ENCODE measurements at regions of chr2 and their contacts with region 1.

Region 1: GRCh38 chr2:236512902-236513435 is 56.7 kb upstream of the ACKR3 start:
- DNase-seq: peak; percentile 57
- H3K4me3 Mint-ChIP-seq: no peak overlapping the region
- H3K27ac Mint-ChIP-seq: no peak overlapping the region
- H3K4me1 Mint-ChIP-seq: no peaks in the 10 kb centered on the region
- H3K27me3 Mint-ChIP-seq: peaks cover 23% of the 10 kb centered on the region

Region 2: GRCh38 chr2:236536727-236537398 is 23.9 kb after region 1 on chr2:
- intact Hi-C with region 1: loop called (anchors 1 kb)
- DNase-seq: peak; percentile 41
- H3K4me3 Mint-ChIP-seq: peak overlapping the region; percentile 88
- H3K27ac Mint-ChIP-seq: peak overlapping the region; percentile 80
- H3K4me1 Mint-ChIP-seq: peaks cover 55% of the 10 kb centered on the region
- H3K27me3 Mint-ChIP-seq: peaks cover 2% of the 10 kb centered on the region

Region 3: GRCh38 chr2:237072067-237072931 is 559.3 kb after region 1 on chr2:
- intact Hi-C with region 1: loop called (anchors 5 kb)
- DNase-seq: peak; percentile 41
- H3K4me3 Mint-ChIP-seq: no peak overlapping the region
- H3K27ac Mint-ChIP-seq: no peak overlapping the region
- H3K4me1 Mint-ChIP-seq: no peaks in the 10 kb centered on the region
- H3K27me3 Mint-ChIP-seq: no peaks in the 10 kb centered on the region